ENCODE measurements at regions of chr9 and their contacts with region 1.

Region 1: GRCh38 chr9:122264360-122265148 is at the starts of genes MRRF and RBM18:
- DNase-seq: peak; percentile 94 to 98
- H3K4me3 ChIP-seq: peak within 1 kb of the TSS; percentile 60 to 77 (median 71)
- H3K27ac ChIP-seq: peak within 1 kb of the TSS; percentile 92 to 96 (median 95)
- H3K4me1 ChIP-seq: peaks cover 35 to 59% (median 48%) of the 10 kb centered on the region in 4 donors
- H3K27me3 ChIP-seq: no peaks in the 10 kb centered on the region
- CTCF ChIP-seq: no peak
- EP300 ChIP-seq: no peak
- POLR2A ChIP-seq: no peak
- total RNA-seq, gene MRRF: 7.1 to 98.6 (median 38.7) TPM
- total RNA-seq, gene RBM18: 1.8 to 13.6 (median 6.4) TPM

Region 2: DNA sequence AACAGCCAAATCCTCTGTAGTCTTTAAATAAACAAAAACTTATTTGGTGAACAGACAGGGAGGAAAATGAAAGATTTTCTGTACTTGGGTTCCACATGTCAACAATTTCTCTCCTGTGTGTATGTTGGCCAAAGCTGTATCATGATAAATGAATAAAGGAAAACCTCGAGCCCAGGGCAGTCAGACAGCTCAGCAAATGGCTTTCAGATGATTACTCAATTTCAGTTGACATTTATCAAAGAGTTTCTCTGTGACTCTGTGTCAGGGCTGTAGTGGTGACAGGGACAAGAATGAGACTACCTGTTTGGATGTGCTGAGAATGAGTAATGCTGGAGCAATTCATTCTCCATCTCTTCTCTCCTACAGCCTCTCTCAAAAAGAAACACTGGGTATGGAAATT is 60.6 kb after region 1 on chr9:
- intact Hi-C with region 1: loop called (anchors 10 kb)
- DNase-seq: no peak
- H3K4me3 ChIP-seq: no peak overlapping the region
- H3K27ac ChIP-seq: peak overlapping the region in 1 of 5 donors; percentile 16
- H3K4me1 ChIP-seq: peaks cover 4 to 27% (median 15%) of the 10 kb centered on the region in 4 donors
- H3K27me3 ChIP-seq: no peaks in the 10 kb centered on the region
- CTCF ChIP-seq: no peak
- EP300 ChIP-seq: no peak
- POLR2A ChIP-seq: no peak